Naive thymus-derived CD4-positive, alpha-beta T cell (primary cell): ENCODE measurements at regions of chr2 and their contacts with region 1.

Region 1: DNA sequence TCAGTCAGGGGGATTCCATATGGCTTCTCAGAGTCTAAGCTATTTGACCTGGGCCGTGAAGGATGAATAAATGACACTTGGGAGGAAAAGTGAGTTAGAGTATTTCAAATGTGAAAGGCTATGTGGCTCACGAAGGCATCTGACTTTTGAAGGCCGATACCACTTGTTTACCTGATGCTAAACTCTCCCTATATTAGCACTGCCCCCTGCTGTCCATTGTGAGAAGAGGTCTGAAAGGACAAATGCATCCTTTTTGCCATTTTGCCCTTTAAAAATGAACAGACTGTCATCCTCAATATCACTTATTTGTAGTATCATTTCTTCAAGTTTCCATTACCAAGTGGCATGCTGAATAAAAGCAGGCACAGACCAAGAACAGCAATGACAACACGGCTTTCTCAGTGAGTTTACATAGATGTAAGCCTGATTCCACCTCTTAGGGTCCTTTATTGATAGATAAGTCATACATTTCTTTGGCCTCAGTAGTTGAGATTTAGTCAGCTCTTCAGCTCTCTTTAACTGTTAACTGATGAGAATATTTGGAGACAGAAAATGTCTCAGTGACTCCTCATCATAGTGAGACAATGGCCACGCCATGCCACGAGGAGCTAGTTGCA is 40.1 kb downstream of the DOCK10 start:
- DNase-seq: peak in 8 of 9 donors; percentile 48 to 75 (median 70)
- ATAC-seq: peak; percentile 93
- H3K4me3 ChIP-seq: no peak overlapping the region
- H3K4me3 Mint-ChIP-seq: peak overlapping the region in 9 of 10 donors; percentile 9 to 70 (median 40)
- H3K27ac ChIP-seq: peak overlapping the region; percentile 23
- H3K27ac Mint-ChIP-seq: peak overlapping the region; percentile 64 to 90 (median 87)
- H3K4me1 ChIP-seq: peaks cover 27 to 43% of the 10 kb centered on the region in 2 donors
- H3K4me1 Mint-ChIP-seq: peaks cover 51 to 97% (median 90%) of the 10 kb centered on the region in 7 donors
- H3K27me3 ChIP-seq: no peaks in the 10 kb centered on the region
- H3K27me3 Mint-ChIP-seq: no peaks in the 10 kb centered on the region

Region 2: GRCh38 chr2:224357098-224357901 is 644.8 kb before region 1 on chr2:
- CTCF ChIA-PET with region 1: no interaction called
- POLR2A ChIA-PET with region 1: no interaction called
- intact Hi-C with region 1: loop called in 1 of 2 experiments (anchors 10 kb)
- DNase-seq: peak; percentile 19 to 68 (median 59)
- ATAC-seq: peak; percentile 82
- H3K4me3 ChIP-seq: no peak overlapping the region
- H3K4me3 Mint-ChIP-seq: no peak overlapping the region
- H3K27ac ChIP-seq: no peak overlapping the region
- H3K27ac Mint-ChIP-seq: no peak overlapping the region
- H3K4me1 ChIP-seq: no peaks in the 10 kb centered on the region
- H3K4me1 Mint-ChIP-seq: peaks cover 0 to 2% (median 0%) of the 10 kb centered on the region in 7 donors
- H3K27me3 ChIP-seq: no peaks in the 10 kb centered on the region
- H3K27me3 Mint-ChIP-seq: peaks cover 8 to 20% (median 9%) of the 10 kb centered on the region in 5 donors

Region 3: GRCh38 chr2:224885836-224886547 is 116.2 kb before region 1 on chr2:
- CTCF ChIA-PET with region 1: interaction called, 3 read pairs
- POLR2A ChIA-PET with region 1: interaction called, 3 read pairs
- intact Hi-C with region 1: loop called (anchors 1 to 2 kb)
- DNase-seq: no peak
- ATAC-seq: peak; percentile 47
- H3K4me3 ChIP-seq: no peak overlapping the region
- H3K4me3 Mint-ChIP-seq: no peak overlapping the region
- H3K27ac ChIP-seq: no peak overlapping the region
- H3K27ac Mint-ChIP-seq: peak overlapping the region; percentile 11 to 81 (median 56)
- H3K4me1 ChIP-seq: peaks cover 8 to 9% of the 10 kb centered on the region in 2 donors
- H3K4me1 Mint-ChIP-seq: peaks cover 49 to 76% (median 57%) of the 10 kb centered on the region in 7 donors
- H3K27me3 ChIP-seq: no peaks in the 10 kb centered on the region
- H3K27me3 Mint-ChIP-seq: no peaks in the 10 kb centered on the region

Region 4: GRCh38 chr2:224946895-224947294 is 55.3 kb before region 1 on chr2:
- CTCF ChIA-PET with region 1: interaction called, 13 read pairs
- POLR2A ChIA-PET with region 1: no interaction called
- intact Hi-C with region 1: loop called (anchors 1 to 2 kb)
- DNase-seq: peak in 7 of 9 donors; percentile 60 to 82 (median 77)
- ATAC-seq: peak; percentile 90
- H3K4me3 ChIP-seq: peak overlapping the region; percentile 59
- H3K4me3 Mint-ChIP-seq: peak overlapping the region; percentile 79 to 99 (median 91)
- H3K27ac ChIP-seq: peak overlapping the region; percentile 84
- H3K27ac Mint-ChIP-seq: peak overlapping the region; percentile 68 to 98 (median 92)
- H3K4me1 ChIP-seq: peaks cover 52 to 69% of the 10 kb centered on the region in 2 donors
- H3K4me1 Mint-ChIP-seq: peaks cover 54 to 91% (median 79%) of the 10 kb centered on the region in 7 donors
- H3K27me3 ChIP-seq: no peaks in the 10 kb centered on the region
- H3K27me3 Mint-ChIP-seq: no peaks in the 10 kb centered on the region

Region 5: DNA sequence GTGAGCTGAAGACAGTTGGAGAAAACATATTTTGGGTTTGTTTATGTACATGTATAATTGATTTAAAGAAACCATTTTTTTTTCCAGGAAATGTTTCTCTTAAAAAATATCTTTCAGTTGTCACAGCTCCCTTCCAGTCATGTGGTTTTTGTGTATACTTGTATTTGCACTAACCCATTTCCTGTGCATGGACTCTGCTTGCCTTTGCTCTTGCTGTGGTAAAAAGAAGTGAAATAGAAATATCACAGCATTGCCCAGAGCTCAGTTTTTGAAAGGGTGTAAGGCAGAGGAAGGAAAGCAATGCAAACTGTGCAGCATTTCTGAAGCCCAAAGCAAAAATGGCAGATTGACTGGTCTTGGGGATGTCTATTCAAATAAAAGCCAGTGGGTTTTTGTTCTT is 50.6 kb after region 1 on chr2:
- CTCF ChIA-PET with region 1: interaction called, 6 read pairs
- POLR2A ChIA-PET with region 1: interaction called, 4 read pairs
- intact Hi-C with region 1: loop called in 1 of 2 experiments (anchors 1 kb)
- DNase-seq: peak in 6 of 9 donors; percentile 53 to 82 (median 73)
- ATAC-seq: peak; percentile 90
- H3K4me3 ChIP-seq: peak overlapping the region; percentile 17
- H3K4me3 Mint-ChIP-seq: peak overlapping the region; percentile 43 to 77 (median 64)
- H3K27ac ChIP-seq: peak overlapping the region; percentile 55
- H3K27ac Mint-ChIP-seq: peak overlapping the region; percentile 60 to 94 (median 80)
- H3K4me1 ChIP-seq: peaks cover 42 to 45% of the 10 kb centered on the region in 2 donors
- H3K4me1 Mint-ChIP-seq: peaks cover 29 to 71% (median 67%) of the 10 kb centered on the region in 7 donors
- H3K27me3 ChIP-seq: no peaks in the 10 kb centered on the region
- H3K27me3 Mint-ChIP-seq: peaks cover 0 to 20% (median 0%) of the 10 kb centered on the region in 5 donors

Region 6: DNA sequence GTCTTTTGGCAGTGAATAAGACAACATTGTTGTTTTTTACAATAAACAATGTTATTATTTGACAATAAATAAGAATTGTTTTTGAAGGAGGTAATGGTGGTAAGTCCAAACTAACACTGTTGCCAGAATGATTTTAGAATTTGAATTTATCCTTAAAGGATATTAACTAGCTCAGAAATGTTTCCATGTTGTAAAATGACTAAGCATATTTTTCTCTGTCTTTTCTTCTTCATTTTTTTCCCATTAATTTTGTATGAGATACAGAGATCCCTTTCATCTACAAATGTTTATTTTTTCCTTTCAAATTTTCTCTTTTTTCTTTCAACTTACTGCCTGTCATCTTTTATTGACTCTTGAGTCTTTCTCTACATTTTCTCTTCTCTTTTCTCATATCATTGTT is 106.7 kb after region 1 on chr2:
- CTCF ChIA-PET with region 1: no interaction called
- POLR2A ChIA-PET with region 1: no interaction called
- intact Hi-C with region 1: no loop called
- DNase-seq: no peak
- ATAC-seq: no peak
- H3K4me3 ChIP-seq: no peak overlapping the region
- H3K4me3 Mint-ChIP-seq: no peak overlapping the region
- H3K27ac ChIP-seq: no peak overlapping the region
- H3K27ac Mint-ChIP-seq: no peak overlapping the region
- H3K4me1 ChIP-seq: no peaks in the 10 kb centered on the region
- H3K4me1 Mint-ChIP-seq: peaks cover 0 to 6% (median 0%) of the 10 kb centered on the region in 7 donors
- H3K27me3 ChIP-seq: no peaks in the 10 kb centered on the region
- H3K27me3 Mint-ChIP-seq: peaks cover 0 to 16% (median 0%) of the 10 kb centered on the region in 5 donors

Region 7: DNA sequence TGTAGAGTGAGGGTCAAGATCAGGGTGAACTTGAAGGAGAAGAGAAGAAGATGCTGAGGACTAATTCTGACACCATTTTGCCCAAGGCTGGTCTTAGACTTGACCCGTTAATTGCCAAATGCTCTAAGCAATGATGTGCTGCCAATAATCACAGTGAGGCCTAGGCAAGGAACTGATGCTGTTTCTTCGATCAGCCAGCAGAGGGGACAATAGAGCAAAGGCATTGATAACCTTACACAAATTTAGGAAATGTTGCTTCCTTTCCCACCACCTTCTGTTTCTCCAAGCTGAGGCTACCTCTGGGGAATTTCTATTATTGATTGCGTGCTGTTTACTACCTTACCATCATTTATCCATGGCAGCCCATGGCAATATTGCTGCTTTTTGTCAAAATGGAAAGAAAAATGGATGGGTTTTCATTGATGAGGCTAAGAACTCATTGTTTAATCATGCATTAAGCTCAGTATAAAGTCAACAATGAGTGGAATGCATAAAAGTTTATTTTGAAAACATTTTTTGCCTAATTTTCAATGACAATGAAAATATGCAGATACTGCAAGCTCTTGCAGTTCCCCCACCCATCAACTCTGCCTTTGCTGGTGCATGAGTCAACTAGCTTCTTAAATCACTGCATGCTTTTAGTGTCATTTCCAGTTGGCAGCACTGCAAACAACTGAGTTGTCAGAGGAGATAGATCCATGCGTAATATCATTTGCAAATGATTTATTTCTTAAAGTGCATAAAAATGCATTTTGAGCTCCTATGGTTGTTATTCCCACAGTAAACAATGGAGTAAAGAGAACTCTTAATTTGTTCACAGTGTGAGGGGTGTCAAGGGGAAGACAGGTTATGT is 280.9 kb after region 1 on chr2:
- CTCF ChIA-PET with region 1: no interaction called
- POLR2A ChIA-PET with region 1: no interaction called
- intact Hi-C with region 1: loop called in 1 of 2 experiments (anchors 1 kb)
- DNase-seq: peak in 5 of 9 donors; percentile 11 to 29 (median 20)
- ATAC-seq: peak; percentile 48
- H3K4me3 ChIP-seq: no peak overlapping the region
- H3K4me3 Mint-ChIP-seq: no peak overlapping the region
- H3K27ac ChIP-seq: no peak overlapping the region
- H3K27ac Mint-ChIP-seq: no peak overlapping the region
- H3K4me1 ChIP-seq: no peaks in the 10 kb centered on the region
- H3K4me1 Mint-ChIP-seq: peaks cover 0 to 8% (median 0%) of the 10 kb centered on the region in 7 donors
- H3K27me3 ChIP-seq: no peaks in the 10 kb centered on the region
- H3K27me3 Mint-ChIP-seq: peaks cover 0 to 2% (median 0%) of the 10 kb centered on the region in 5 donors

Region 8: GRCh38 chr2:225310745-225311144 is 308.6 kb after region 1 on chr2:
- CTCF ChIA-PET with region 1: no interaction called
- POLR2A ChIA-PET with region 1: no interaction called
- intact Hi-C with region 1: no loop called
- DNase-seq: no peak
- ATAC-seq: no peak
- H3K4me3 ChIP-seq: no peak overlapping the region
- H3K4me3 Mint-ChIP-seq: no peak overlapping the region
- H3K27ac ChIP-seq: no peak overlapping the region
- H3K27ac Mint-ChIP-seq: no peak overlapping the region
- H3K4me1 ChIP-seq: no peaks in the 10 kb centered on the region
- H3K4me1 Mint-ChIP-seq: no peaks in the 10 kb centered on the region
- H3K27me3 ChIP-seq: no peaks in the 10 kb centered on the region
- H3K27me3 Mint-ChIP-seq: peaks cover 0 to 4% (median 0%) of the 10 kb centered on the region in 5 donors